CD4-positive, alpha-beta T cell (primary cell): ENCODE measurements at regions of chr4 and their contacts with region 1.

Region 1: DNA sequence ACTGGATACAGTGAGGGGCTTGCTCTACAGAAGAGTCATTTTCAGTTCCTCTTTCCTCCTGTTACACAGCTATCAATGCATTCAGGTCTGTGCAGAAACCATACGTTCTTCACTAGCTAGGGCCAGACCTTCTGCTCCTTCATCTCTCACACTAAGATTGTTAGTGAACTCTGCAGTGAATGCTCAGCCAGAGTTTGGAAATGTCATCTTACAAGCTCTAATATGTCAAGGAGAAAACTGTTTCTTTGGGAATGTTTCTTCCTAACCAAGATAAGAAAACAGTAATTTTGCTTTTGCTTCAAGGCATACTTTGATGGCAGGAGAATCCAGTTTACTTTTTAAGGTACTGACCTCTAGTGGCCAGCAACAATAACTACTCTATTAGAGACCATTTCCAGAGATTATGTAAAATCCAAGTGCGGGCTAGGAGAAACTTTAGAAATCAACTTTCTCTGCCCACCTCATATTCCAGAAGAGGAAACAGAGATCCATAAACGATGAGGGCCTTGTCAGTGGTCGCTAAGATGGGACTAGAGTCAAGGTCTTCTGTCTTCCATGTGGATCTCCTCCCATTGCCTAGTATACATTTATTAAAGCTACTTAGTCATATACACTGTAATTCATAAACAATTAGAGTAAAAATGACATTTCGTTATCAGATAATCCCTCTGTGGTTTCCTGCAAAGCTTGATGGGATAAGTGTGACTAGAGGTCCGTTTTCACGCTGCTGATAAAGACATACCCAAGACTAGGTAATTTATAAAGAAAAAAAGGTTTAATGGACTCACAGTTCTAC is 12.1 kb upstream of the CC2D2A start:
- DNase-seq: peak in 3 of 14 experiments; percentile 51 to 62 (median 54)
- ATAC-seq: peak; percentile 59
- H3K4me3 ChIP-seq: no peak overlapping the region
- H3K4me3 Mint-ChIP-seq: no peak overlapping the region
- H3K27ac ChIP-seq: no peak overlapping the region
- H3K27ac Mint-ChIP-seq: no peak overlapping the region
- H3K4me1 ChIP-seq: no peaks in the 10 kb centered on the region
- H3K4me1 Mint-ChIP-seq: peaks cover 11% of the 10 kb centered on the region
- H3K27me3 ChIP-seq: no peaks in the 10 kb centered on the region
- H3K27me3 Mint-ChIP-seq: no peaks in the 10 kb centered on the region
- CTCF ChIP-seq: peak; percentile 80

Region 2: GRCh38 chr4:14695095-14695845 is 762.3 kb before region 1 on chr4:
- CTCF ChIA-PET with region 1: no interaction called
- POLR2A ChIA-PET with region 1: no interaction called
- intact Hi-C with region 1: no loop called
- DNase-seq: no peak
- ATAC-seq: no peak
- H3K4me3 ChIP-seq: no peak overlapping the region
- H3K4me3 Mint-ChIP-seq: no peak overlapping the region
- H3K27ac ChIP-seq: no peak overlapping the region
- H3K27ac Mint-ChIP-seq: no peak overlapping the region
- H3K4me1 ChIP-seq: no peaks in the 10 kb centered on the region
- H3K4me1 Mint-ChIP-seq: no peaks in the 10 kb centered on the region
- H3K27me3 ChIP-seq: no peaks in the 10 kb centered on the region
- H3K27me3 Mint-ChIP-seq: peaks cover 3% of the 10 kb centered on the region
- CTCF ChIP-seq: no peak

Region 3: GRCh38 chr4:14749910-14750309 is 707.7 kb before region 1 on chr4:
- CTCF ChIA-PET with region 1: no interaction called
- POLR2A ChIA-PET with region 1: no interaction called
- intact Hi-C with region 1: loop called in 1 of 2 experiments (anchors 10 kb)
- DNase-seq: peak in 5 of 14 experiments; percentile 2 to 18 (median 6)
- ATAC-seq: no peak
- H3K4me3 ChIP-seq: no peak overlapping the region
- H3K4me3 Mint-ChIP-seq: no peak overlapping the region
- H3K27ac ChIP-seq: no peak overlapping the region
- H3K27ac Mint-ChIP-seq: no peak overlapping the region
- H3K4me1 ChIP-seq: no peaks in the 10 kb centered on the region
- H3K4me1 Mint-ChIP-seq: no peaks in the 10 kb centered on the region
- H3K27me3 ChIP-seq: no peaks in the 10 kb centered on the region
- H3K27me3 Mint-ChIP-seq: peaks cover 7% of the 10 kb centered on the region
- CTCF ChIP-seq: peak; percentile 9

Region 4: GRCh38 chr4:15238720-15239119 is 218.9 kb before region 1 on chr4:
- CTCF ChIA-PET with region 1: no interaction called
- POLR2A ChIA-PET with region 1: no interaction called
- intact Hi-C with region 1: loop called (anchors 1 to 2 kb)
- DNase-seq: peak in 6 of 14 experiments; percentile 5 to 56 (median 38)
- ATAC-seq: peak; percentile 52
- H3K4me3 ChIP-seq: no peak overlapping the region
- H3K4me3 Mint-ChIP-seq: no peak overlapping the region
- H3K27ac ChIP-seq: no peak overlapping the region
- H3K27ac Mint-ChIP-seq: no peak overlapping the region
- H3K4me1 ChIP-seq: peaks cover 7% of the 10 kb centered on the region
- H3K4me1 Mint-ChIP-seq: peaks cover 13% of the 10 kb centered on the region
- H3K27me3 ChIP-seq: no peaks in the 10 kb centered on the region
- H3K27me3 Mint-ChIP-seq: no peaks in the 10 kb centered on the region
- CTCF ChIP-seq: peak; percentile 54